Dorsolateral prefrontal cortex (tissue), 120 donors: ENCODE measurements at regions of chr7 and their contacts with region 1.

Region 1: DNA sequence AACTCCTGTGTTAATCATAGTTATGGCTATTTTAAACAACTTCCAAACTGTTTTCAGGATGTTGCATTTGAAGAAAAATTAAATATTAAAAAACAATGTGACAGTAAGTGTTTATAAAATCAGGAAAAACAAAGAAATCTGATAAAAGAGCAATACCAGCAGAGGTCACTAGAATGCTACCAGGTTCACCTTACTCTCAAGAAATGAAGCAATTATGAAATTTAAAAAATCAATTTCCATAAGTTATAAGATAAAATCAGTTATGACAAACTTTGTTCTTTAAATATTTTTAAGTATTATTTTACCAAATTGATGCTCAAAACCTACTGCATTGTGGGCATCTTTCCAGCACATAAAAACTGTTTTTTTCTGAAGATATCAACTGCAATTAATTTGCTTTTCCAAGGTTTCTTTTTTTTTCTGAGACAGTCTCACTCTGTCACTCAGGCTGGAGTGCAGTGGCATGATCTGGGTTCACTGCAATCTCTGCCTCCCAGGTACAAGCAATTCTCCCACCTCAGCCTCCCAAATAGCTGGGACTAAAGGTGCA is 50.7 kb upstream of the RHEB start:
- DNase-seq: no peak
- H3K4me3 ChIP-seq: no peak overlapping the region
- H3K27ac ChIP-seq: no peak overlapping the region
- H3K27me3 ChIP-seq: no peaks in the 10 kb centered on the region
- CTCF ChIP-seq: peak in 55 of 56 donors; percentile 17 to 74 (median 49)

Region 2: GRCh38 chr7:151705636-151706276 is 135.3 kb after region 1 on chr7:
- intact Hi-C with region 1: loop called in 1 of 2 experiments (anchors 5 kb)
- DNase-seq: peak in 1 of 10 donors; percentile 45
- H3K4me3 ChIP-seq: peak overlapping the region in 36 of 59 donors; percentile 3 to 55 (median 34)
- H3K27ac ChIP-seq: peak overlapping the region in 4 of 59 donors; percentile 31 to 47 (median 39)
- H3K27me3 ChIP-seq: no peaks in the 10 kb centered on the region
- CTCF ChIP-seq: peak in 53 of 56 donors; percentile 23 to 69 (median 53)